ENCODE measurements at regions of chr12 and their contacts with region 1.

Region 1: DNA sequence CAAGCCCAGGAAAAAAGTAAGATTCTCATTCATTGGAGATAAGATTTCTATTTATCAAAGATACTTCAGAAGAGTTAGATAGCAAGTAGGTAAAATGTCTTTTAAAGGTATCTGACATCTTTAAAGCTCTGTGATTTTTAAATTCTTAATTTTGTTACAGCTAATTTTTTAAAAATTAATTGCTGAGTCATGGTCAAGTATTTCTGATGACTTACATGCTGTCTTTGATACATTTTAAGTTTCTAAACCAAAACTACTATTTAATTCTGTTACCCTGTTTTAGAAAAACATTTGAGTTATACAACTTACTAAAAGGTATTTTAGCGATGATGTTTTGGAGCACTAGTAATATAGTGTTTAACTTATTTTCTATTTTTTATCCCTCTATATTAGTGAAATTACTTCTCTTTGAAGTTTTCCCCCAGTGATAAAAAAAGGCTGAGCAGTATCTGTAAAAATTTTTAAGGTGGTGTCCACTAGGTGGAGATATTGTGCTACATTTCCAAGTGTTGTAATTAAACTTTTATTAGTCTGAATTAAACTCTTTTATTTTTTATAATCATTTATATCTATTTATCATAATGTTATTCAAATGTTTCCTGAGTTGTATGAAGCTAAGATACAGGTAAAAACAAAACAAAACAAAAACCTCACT is 11.5 kb downstream of the ALG10 start:
- DNase-seq: no peak
- ATAC-seq: no peak
- H3K4me3 ChIP-seq: no peak overlapping the region
- H3K27ac ChIP-seq: no peak overlapping the region
- H3K4me1 ChIP-seq: no peaks in the 10 kb centered on the region
- H3K27me3 ChIP-seq: no peaks in the 10 kb centered on the region
- CTCF ChIP-seq: peak; percentile 26 to 71 (median 61)

Region 2: DNA sequence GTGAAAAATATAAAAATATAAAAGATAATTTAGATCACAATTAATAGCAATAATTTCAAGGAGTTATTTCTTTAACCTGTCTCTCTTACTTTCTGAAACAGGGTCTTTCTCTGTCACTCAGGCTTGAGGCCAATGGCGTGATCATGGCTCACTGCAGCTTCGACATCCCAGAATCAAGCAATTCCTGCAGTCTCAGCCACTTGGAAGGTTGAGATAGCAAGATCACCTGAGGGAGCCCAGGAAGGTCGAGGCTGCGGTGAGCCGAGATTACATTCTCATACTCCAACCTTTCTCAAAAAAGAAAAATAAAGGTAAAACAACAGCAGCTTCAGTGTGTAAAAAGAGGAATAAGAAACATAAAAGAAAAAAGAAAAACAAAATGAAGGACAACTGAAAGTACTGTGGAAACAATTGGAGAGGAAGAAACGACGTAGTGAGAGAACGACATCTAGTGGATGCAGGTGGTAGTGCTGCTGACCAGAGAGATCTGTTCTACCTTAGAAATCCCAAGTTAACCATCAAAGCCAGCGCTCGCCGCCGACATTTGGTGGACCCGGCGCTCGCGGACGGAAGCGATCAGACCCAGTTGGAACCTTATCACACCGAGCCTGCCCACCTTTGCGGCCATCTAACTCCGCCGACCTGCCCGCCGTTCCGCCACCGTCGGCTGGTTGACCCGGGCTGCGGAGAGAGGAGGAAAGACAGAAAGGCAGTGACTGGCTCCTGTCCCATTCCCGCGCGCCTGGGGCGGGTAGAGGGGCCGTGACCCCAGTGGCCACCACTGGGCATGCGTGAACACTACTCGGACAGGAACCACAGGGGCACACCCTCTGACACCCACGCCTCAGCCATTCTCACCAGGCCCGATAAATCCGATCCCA is 184.7 kb after region 1 on chr12:
- intact Hi-C with region 1: loop called in 5 of 10 experiments (anchors 5 to 10 kb)
- DNase-seq: peak; percentile 37 to 72
- ATAC-seq: peak; percentile 75 to 94 (median 88)
- H3K4me3 ChIP-seq: peak overlapping the region; percentile 37 to 63 (median 52)
- H3K27ac ChIP-seq: peak overlapping the region in 5 of 10 donors; percentile 4 to 75 (median 61)
- H3K4me1 ChIP-seq: peaks cover 0 to 14% (median 4%) of the 10 kb centered on the region in 9 donors
- H3K27me3 ChIP-seq: peaks cover 0 to 15% (median 7%) of the 10 kb centered on the region in 7 donors
- CTCF ChIP-seq: peak; percentile 76 to 98 (median 94)

Region 3: GRCh38 chr12:34625116-34625515 is 591.4 kb after region 1 on chr12:
- intact Hi-C with region 1: loop called in 3 of 10 experiments (anchors 5 to 10 kb)
- DNase-seq: no peak
- ATAC-seq: no peak
- H3K4me3 ChIP-seq: no peak overlapping the region
- H3K27ac ChIP-seq: no peak overlapping the region
- H3K4me1 ChIP-seq: no peaks in the 10 kb centered on the region
- H3K27me3 ChIP-seq: peaks cover 0 to 4% (median 0%) of the 10 kb centered on the region in 7 donors
- CTCF ChIP-seq: peak in 6 of 9 donors; percentile 21 to 58 (median 40)

Measured in heart right ventricle (tissue), 16 donors.